ENCODE measurements at regions of chrX and their contacts with region 1.

Region 1: GRCh38 chrX:103343105-103343504 is 13.1 kb downstream of the TCEAL7 start:
- DNase-seq: peak; percentile 45
- H3K4me3 ChIP-seq: no peak overlapping the region
- H3K27ac ChIP-seq: no peak overlapping the region
- H3K4me1 ChIP-seq: no peaks in the 10 kb centered on the region
- H3K27me3 ChIP-seq: no peaks in the 10 kb centered on the region
- CTCF ChIP-seq: peak; percentile 54

Region 2: DNA sequence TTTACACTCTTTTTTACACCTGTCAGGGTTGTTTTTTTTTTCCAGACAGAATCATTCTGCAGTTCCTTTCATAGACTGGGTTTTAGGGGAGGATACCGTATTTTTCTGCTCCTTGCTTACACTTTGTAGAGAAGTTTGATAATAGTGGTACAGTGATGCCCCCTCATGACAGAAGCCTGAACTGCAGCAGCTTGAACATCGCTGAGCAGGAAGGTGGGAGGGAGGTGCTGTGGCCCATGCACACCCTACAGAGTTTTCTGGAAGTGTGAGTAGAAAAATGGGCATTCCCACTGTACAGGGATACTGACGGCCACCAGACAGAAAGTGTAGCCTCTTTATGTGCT is 121.6 kb after region 1 on chrX:
- intact Hi-C with region 1: loop called (anchors 5 kb)
- DNase-seq: peak; percentile 82
- H3K4me3 ChIP-seq: peak overlapping the region; percentile 14
- H3K27ac ChIP-seq: no peak overlapping the region
- H3K4me1 ChIP-seq: no peaks in the 10 kb centered on the region
- H3K27me3 ChIP-seq: no peaks in the 10 kb centered on the region
- CTCF ChIP-seq: peak; percentile 69

Measured in colonic mucosa (tissue), 4 donors.